ENCODE measurements at regions of chr17 and their contacts with region 1.

Region 1: DNA sequence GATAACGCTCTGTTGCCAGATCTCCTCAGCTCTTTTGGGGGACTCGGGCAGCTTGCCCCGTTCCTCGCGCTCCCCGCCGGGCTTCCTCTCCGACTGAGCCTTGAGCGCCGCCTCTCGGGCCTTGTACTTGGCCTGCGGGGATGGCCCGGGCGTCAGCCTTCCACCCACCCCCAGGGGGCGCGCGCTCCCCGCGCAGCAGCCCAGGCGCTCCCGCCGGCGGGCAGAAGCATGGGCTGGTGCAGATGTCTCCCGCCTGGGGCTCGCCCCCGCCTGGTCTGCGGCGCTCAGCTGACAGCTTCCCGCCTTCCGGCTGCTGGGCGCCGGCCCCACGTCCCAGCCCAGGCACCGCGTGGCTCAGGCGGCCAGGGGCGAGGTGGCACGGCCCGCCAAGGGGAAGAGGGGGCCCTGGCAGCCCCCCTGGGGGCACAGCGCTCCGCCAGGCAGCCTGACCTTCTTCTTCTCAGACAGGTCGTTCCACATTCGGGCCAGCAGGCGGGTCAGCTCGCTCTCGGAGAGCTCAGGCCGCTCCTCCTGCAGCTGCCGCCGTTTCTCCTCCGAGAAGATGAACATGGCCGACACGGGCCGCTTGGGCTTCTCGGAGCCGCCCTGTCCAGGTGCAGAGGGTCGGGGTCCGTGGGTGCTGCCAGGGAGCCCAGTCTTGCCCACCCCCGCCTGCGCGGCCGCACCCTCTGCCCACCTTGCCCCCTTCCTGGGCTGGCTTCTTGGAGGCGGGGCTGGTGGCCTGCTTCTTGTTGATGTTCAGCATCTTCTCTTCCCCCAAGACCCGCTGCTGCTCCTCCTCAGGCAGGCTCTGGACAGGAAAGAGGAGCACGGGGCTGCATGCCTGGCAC is 8.9 kb downstream of the UBTF start:
- DNase-seq: no peak
- H3K4me3 ChIP-seq: no peak overlapping the region
- CTCF ChIP-seq: peak; percentile 100

Region 2: DNA sequence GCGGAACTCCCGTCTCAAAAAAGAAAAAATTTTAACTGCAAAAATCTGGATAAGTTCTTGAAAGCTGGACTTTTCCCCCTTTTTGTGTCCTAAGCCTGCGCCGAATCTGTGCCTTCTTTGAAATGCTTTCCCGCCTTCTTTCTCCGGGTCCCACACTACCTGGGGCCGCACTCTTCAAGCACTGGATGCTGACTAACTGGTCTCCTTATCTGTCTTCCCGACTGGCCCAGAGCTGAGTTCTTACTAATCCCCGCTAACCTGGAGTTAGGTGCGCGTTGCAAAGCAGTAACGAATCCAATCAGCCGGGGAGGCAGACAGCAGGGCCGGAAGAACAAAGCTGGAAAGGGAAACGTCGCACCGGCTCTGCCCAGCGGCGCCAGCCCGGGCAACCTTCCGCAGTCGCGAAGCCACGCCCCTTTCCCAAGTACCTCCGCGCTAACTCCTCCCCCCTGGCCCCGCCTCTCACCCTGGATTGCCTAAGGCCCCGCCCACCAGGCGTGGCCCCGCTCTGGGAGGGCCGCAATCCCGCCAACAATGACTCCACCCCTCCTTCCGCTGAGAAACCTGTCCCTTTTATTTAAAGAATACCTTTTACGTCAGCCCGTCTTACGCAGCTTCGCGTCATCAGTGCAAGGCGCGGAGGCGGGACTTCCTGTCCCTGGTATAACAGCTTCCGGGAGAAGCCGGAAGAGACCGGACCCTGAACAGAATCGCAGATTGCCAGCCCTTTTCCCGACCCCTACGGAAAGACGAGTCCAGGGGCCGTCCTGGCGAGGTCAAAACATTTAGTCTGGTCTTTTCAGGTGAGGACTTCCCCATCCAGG is 24.0 kb before region 1 on chr17 and contains the start of gene TMUB2:
- CTCF ChIA-PET with region 1: interaction called, 12 read pairs
- POLR2A ChIA-PET with region 1: interaction called, 3 read pairs
- DNase-seq: peak; percentile 97
- H3K4me3 ChIP-seq: peak within 1 kb of the TSS; percentile 100
- CTCF ChIP-seq: no peak

Region 3: GRCh38 chr17:44247440-44247841 is 36.9 kb after region 1 on chr17:
- CTCF ChIA-PET with region 1: no interaction called
- POLR2A ChIA-PET with region 1: no interaction called
- DNase-seq: no peak
- H3K4me3 ChIP-seq: no peak overlapping the region
- CTCF ChIP-seq: no peak

Region 4: GRCh38 chr17:44314869-44315661 is 104.5 kb after region 1 on chr17:
- CTCF ChIA-PET with region 1: interaction called, 12 read pairs
- POLR2A ChIA-PET with region 1: no interaction called
- DNase-seq: no peak
- H3K4me3 ChIP-seq: peak overlapping the region; percentile 43
- CTCF ChIP-seq: no peak

Region 5: DNA sequence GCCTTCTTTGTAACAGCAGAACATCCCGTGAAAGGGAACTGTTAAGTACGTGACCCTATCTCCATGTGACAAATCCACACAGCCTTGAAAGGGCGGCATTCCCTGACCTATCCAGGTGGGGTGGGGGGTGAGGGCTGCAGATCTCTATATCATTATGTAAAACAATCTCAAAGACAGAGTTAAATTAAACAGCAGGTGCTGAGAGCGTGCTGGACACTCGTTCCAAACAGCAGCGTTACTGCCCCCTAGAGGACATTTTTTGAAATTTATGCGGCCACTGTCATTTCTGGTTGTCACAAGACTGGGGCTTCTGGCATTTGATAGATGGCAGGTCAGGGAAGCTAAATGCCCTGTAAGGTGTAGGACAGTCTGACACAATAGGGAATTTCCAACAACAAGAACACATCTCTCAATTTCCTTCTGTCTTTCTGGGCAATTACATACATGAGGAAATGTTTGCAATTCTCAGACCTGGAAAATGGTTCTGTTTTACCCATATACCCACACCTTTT is 120.7 kb after region 1 on chr17:
- CTCF ChIA-PET with region 1: interaction called, 130 read pairs
- POLR2A ChIA-PET with region 1: interaction called, 5 read pairs
- DNase-seq: no peak
- H3K4me3 ChIP-seq: no peak overlapping the region
- CTCF ChIP-seq: peak; percentile 61

Region 6: DNA sequence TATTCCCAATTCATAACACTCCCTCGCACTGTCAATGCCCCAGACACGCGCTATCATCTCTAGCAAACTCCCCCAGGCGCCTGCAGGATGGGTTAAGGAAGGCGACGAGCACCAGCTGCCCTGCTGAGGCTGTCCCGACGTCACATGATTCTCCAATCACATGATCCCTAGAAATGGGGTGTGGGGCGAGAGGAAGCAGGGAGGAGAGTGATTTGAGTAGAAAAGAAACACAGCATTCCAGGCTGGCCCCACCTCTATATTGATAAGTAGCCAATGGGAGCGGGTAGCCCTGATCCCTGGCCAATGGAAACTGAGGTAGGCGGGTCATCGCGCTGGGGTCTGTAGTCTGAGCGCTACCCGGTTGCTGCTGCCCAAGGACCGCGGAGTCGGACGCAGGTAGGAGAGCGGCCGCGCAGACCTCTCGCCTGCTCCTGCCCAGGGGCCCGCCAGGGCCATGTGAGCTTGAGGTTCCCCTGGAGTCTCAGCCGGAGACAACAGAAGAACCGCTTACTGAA is 134.4 kb after region 1 on chr17 and contains the start of gene GRN:
- CTCF ChIA-PET with region 1: interaction called, 31 read pairs
- POLR2A ChIA-PET with region 1: interaction called, 3 read pairs
- DNase-seq: peak; percentile 93
- H3K4me3 ChIP-seq: peak within 1 kb of the TSS; percentile 95
- CTCF ChIP-seq: no peak